Heart right ventricle (tissue), 16 donors: ENCODE measurements at regions of chr13 and their contacts with region 1.

Region 1: GRCh38 chr13:32594157-32594738 is 8.0 kb downstream of the PDS5B start:
- DNase-seq: no peak
- ATAC-seq: peak in 1 of 8 donors; percentile 13
- H3K4me3 ChIP-seq: no peak overlapping the region
- H3K27ac ChIP-seq: no peak overlapping the region
- H3K4me1 ChIP-seq: peaks cover 0 to 36% (median 25%) of the 10 kb centered on the region in 9 donors
- H3K27me3 ChIP-seq: no peaks in the 10 kb centered on the region
- CTCF ChIP-seq: no peak

Region 2: DNA sequence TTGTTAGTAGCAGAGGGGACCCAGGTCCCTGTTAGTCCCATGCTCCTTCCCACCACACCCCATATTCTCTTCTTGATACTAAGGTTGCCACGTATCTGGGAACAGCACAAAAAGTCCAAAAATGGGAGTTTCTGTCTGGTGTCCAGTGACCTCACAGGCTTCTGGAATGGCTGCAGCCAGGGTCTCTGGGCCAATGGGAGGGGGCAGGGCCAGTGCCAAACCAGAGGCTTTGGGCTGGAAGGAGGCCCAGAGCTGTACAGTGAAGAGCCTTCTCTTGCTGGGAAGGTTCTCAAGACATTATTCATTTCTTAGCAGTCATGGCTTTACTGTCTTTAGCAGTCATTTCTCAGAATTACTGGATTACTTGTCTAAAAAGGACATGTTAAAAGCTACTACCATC is 443.5 kb before region 1 on chr13:
- intact Hi-C with region 1: no loop called
- DNase-seq: peak; percentile 73 to 78
- ATAC-seq: peak; percentile 89 to 96 (median 93)
- H3K4me3 ChIP-seq: no peak overlapping the region
- H3K27ac ChIP-seq: peak overlapping the region; percentile 41 to 89 (median 79)
- H3K4me1 ChIP-seq: peaks cover 0 to 46% (median 21%) of the 10 kb centered on the region in 9 donors
- H3K27me3 ChIP-seq: no peaks in the 10 kb centered on the region
- CTCF ChIP-seq: no peak

Region 3: GRCh38 chr13:32496599-32497160 is 97.6 kb before region 1 on chr13:
- intact Hi-C with region 1: no loop called
- DNase-seq: no peak
- ATAC-seq: peak in 4 of 8 donors; percentile 11 to 53 (median 44)
- H3K4me3 ChIP-seq: no peak overlapping the region
- H3K27ac ChIP-seq: no peak overlapping the region
- H3K4me1 ChIP-seq: peaks cover 0 to 25% (median 15%) of the 10 kb centered on the region in 9 donors
- H3K27me3 ChIP-seq: no peaks in the 10 kb centered on the region
- CTCF ChIP-seq: no peak

Region 4: DNA sequence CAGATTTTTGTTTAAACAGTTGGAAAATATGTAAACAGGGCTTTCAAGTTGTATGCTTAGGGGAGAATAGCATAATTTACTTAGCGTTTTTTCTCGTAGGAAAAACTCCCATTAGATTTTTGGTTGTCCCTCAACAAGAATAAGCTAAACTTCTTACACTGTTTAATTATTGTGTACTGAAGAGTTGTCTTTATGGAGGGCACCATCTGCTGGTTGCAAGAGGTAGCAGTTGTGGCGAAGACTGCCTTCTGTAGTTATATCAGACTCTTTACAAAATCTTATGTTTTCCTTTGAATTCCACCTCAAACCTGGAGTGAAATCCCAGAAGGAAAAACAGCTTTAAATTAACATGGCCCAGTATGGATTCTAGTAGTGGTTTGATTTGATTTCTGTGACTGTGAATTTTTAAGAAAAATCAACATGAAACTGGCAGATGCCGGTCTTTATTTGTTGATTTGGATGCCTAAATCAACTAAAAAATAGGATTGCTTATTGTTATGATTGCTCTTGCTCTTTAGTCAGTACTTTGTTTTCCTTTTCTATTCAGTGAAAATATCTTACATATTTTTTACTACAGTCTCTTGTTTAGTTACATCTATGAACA is 45.4 kb after region 1 on chr13:
- intact Hi-C with region 1: loop called in 7 of 10 experiments (anchors 2 to 5 kb)
- DNase-seq: peak in 1 of 2 donors; percentile 65
- ATAC-seq: peak; percentile 69 to 92 (median 86)
- H3K4me3 ChIP-seq: no peak overlapping the region
- H3K27ac ChIP-seq: no peak overlapping the region
- H3K4me1 ChIP-seq: peaks cover 0 to 35% (median 8%) of the 10 kb centered on the region in 9 donors
- H3K27me3 ChIP-seq: no peaks in the 10 kb centered on the region
- CTCF ChIP-seq: peak; percentile 60 to 95 (median 84)